H1 (cell line): ENCODE measurements at regions of chr17 and their contacts with region 1.

Region 1: DNA sequence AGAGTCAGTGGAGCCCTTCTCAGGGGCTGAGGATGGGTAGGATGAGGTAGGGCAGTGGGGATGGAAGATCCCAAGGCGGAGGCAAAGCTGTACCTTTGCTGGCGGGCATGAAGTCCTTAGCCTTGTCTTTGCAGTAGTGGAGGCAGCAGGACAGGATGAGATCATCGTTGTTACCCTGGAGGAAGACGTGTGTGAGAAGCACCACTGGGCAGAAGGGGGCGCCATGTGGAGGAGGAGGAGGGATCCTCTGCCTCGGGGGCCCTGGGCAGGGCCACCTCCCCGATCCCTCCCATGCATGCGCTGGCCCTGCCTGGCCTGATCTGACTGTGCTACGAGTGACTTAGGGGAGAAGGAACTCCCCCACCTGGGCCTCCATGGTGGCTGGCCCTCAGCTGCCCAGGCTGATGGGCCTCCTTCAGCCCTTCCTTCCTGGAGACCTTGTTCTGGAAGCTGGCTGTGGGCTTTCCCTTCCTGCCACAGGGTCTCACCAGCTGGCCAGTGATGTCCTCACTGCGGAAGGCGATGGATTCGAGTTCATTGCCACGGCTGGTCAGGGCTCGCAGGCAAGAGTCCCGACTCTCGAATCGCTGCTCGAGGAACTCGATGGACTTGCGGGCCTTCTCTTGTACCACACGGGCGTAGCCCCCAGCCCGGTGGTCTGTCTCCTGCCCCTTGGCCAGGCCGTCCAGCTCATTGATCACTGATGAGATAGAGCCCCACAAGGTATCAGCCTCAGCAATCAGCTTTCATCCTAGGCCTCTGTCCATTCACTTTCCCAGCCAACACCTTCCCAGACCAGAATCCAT is 10.3 kb downstream of the HIC1 start:
- DNase-seq: peak in 1 of 2 experiments; percentile 89
- H3K4me3 ChIP-seq: no peak overlapping the region
- H3K27ac ChIP-seq: no peak overlapping the region
- H3K4me1 ChIP-seq: peaks cover 0 to 13% (median 9%) of the 10 kb centered on the region in 4 experiments; a peak in 6 of 7 replicates
- H3K27me3 ChIP-seq: peaks cover 0 to 11% (median 5%) of the 10 kb centered on the region in 4 experiments; a peak in 5 of 7 replicates
- CTCF ChIP-seq: peak; percentile 70 to 91 (median 90)
- EP300 ChIP-seq: no peak
- POLR2A ChIP-seq: no peak
- RAD21 ChIP-seq: peak; percentile 71 to 73

Region 2: DNA sequence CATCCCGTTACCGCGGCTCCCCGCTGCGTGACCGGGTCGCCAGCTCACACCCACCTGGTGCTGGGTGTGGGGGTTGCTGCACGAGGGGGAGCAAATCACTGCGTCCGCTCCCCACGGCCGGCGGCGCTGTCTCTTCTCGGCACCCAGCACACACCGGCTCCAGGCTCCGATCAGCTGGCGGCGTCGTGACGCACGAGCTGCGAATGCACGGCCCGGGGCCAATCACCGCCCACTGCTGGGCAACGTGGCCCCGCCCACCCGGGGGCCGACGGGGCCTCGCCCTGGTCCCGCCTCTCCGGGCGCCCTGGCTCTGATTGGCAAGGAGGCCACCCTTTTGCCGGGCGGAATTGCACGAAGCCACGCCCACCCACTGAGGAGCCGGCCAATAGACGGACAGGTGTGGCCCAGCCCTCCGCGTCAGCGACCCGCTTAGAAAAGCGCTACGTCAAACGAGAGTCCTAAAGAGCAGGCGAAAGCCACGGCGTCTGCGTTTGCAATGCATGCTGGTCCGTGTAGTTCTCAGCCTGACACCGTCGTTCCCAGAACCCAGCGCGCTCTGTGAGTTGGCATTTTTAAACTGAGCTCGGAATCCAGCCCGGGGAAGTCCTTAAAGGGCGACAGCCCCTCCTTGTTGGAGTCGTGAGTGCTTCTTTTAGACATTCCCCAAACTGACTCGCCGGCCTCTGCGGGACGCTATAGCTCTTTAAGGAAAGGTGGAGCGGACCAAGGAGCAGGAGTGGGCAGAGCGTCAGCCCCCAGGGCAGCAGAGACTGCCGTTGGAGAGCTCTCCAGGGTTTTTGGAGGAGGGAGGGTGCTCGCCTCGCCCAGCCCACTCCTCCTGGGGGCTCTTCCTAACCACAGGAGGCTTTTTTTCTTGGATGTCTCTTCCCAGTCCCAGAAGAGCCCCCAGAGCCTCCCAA is 348.8 kb before region 1 on chr17:
- CTCF ChIA-PET with region 1: no interaction called
- POLR2A ChIA-PET with region 1: no interaction called
- DNase-seq: peak; percentile 99 to 100
- H3K4me3 ChIP-seq: peak overlapping the region; percentile 74 to 94 (median 82)
- H3K27ac ChIP-seq: peak overlapping the region; percentile 94
- H3K4me1 ChIP-seq: peaks cover 0 to 16% (median 12%) of the 10 kb centered on the region in 4 experiments; a peak in 6 of 7 replicates
- H3K27me3 ChIP-seq: no peaks in the 10 kb centered on the region
- CTCF ChIP-seq: no peak; a peak in 1 of 4 replicates
- EP300 ChIP-seq: no peak
- POLR2A ChIP-seq: peak; percentile 32 to 70
- RAD21 ChIP-seq: no peak

Region 3: DNA sequence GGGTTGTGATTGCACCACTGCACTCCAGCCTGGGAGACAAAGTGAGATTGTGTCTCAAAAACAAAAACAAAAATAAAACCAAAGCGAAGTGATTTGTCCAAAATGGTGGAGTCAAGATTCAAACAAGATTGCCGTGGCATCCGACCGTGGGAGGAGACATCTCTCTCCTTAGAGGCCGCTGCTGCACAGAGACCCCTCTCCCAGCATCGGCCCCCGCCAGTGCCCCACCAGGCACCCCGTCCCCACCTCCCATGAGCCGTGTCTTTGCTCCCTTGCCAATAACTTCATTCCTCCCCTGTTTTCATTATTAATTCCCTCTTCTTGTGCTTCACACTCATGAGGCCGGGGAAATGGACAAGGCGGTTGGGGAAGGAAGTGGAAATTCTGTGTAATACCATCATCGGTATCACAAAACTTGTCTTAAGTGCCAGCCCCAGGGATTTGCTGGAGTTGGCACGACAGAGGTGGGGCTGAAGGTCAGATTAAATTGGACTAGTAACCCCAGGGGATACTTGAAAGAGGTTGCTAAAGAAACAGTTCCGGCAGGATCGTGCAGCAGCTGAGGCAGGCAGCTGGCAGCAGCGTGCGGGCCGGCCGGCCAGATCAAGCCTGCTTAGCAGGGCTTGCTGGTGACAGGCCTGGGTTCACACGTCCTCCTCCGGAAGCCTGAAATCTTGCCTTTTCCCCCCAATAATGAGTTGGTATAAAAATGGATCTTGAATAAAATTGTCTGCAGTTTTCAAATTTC is 106.9 kb before region 1 on chr17:
- CTCF ChIA-PET with region 1: no interaction called
- POLR2A ChIA-PET with region 1: no interaction called
- DNase-seq: no peak
- H3K4me3 ChIP-seq: no peak overlapping the region
- H3K27ac ChIP-seq: no peak overlapping the region
- H3K4me1 ChIP-seq: peaks cover 0 to 7% (median 3%) of the 10 kb centered on the region in 4 experiments; a peak in 4 of 7 replicates
- H3K27me3 ChIP-seq: no peaks in the 10 kb centered on the region
- CTCF ChIP-seq: no peak
- EP300 ChIP-seq: no peak
- POLR2A ChIP-seq: no peak
- RAD21 ChIP-seq: no peak

Region 4: GRCh38 chr17:2075336-2076086 is 10.3 kb after region 1 on chr17:
- CTCF ChIA-PET with region 1: interaction called, 122 read pairs
- POLR2A ChIA-PET with region 1: interaction called, 4 read pairs
- DNase-seq: no peak
- H3K4me3 ChIP-seq: no peak overlapping the region
- H3K27ac ChIP-seq: no peak overlapping the region; the same call in 1 of the 2 replicates
- H3K4me1 ChIP-seq: peaks cover 2 to 12% (median 5%) of the 10 kb centered on the region in 4 experiments; a peak in 6 of 7 replicates
- H3K27me3 ChIP-seq: no peaks in the 10 kb centered on the region
- CTCF ChIP-seq: peak in 2 of 3 experiments; percentile 5 to 8; a peak in 1 of 4 replicates
- EP300 ChIP-seq: no peak
- POLR2A ChIP-seq: no peak
- RAD21 ChIP-seq: peak in 1 of 2 experiments; percentile 1; a peak in 1 of 4 replicates

Region 5: DNA sequence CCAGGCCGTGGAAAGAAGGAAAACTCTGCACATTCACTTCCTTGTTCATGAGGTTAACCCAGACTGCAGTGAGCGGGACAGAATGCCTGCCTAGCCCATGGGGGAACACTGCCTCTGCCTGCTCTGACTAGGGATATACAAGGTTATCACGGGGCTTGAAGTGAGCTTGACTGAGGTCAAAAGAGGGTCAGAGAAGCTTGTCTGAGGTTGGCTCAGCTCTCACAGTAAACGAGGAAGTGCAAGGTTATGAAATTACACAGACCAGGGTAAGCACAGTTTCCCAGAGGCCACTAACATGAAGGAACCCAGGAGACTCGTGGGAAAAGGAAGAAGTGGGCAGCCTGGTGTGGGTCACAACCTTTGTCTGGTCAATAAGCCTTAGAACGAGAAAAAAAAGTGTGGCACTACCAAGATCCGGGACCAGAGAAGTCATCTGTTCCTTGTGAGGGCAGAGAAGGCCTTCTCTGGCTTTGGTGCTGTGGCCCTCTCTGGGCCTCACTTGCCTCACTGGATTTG is 18.5 kb after region 1 on chr17:
- CTCF ChIA-PET with region 1: interaction called, 21 read pairs
- POLR2A ChIA-PET with region 1: interaction called, 4 read pairs
- DNase-seq: no peak
- H3K4me3 ChIP-seq: no peak overlapping the region
- H3K27ac ChIP-seq: no peak overlapping the region
- H3K4me1 ChIP-seq: 0 out of 7 replicates have a peak, but pooled peaks cover 0 to 3% (median 0%) of the 10 kb centered on the region in 4 experiments
- H3K27me3 ChIP-seq: no peaks in the 10 kb centered on the region
- CTCF ChIP-seq: no peak
- EP300 ChIP-seq: no peak
- POLR2A ChIP-seq: no peak
- RAD21 ChIP-seq: no peak

Region 6: GRCh38 chr17:2172077-2172851 is 107.1 kb after region 1 on chr17:
- CTCF ChIA-PET with region 1: interaction called, 12 read pairs
- POLR2A ChIA-PET with region 1: interaction called, 3 read pairs
- DNase-seq: no peak
- H3K4me3 ChIP-seq: no peak overlapping the region
- H3K27ac ChIP-seq: no peak overlapping the region
- H3K4me1 ChIP-seq: peaks cover 0 to 4% (median 0%) of the 10 kb centered on the region in 4 experiments; a peak in 2 of 7 replicates
- H3K27me3 ChIP-seq: no peaks in the 10 kb centered on the region
- CTCF ChIP-seq: no peak
- EP300 ChIP-seq: no peak
- POLR2A ChIP-seq: no peak
- RAD21 ChIP-seq: no peak

Region 7: GRCh38 chr17:2253768-2254406 is 188.7 kb after region 1 on chr17:
- CTCF ChIA-PET with region 1: interaction called, 121 read pairs
- POLR2A ChIA-PET with region 1: no interaction called
- DNase-seq: no peak
- H3K4me3 ChIP-seq: no peak overlapping the region
- H3K27ac ChIP-seq: no peak overlapping the region
- H3K4me1 ChIP-seq: no peaks in the 10 kb centered on the region
- H3K27me3 ChIP-seq: no peaks in the 10 kb centered on the region
- CTCF ChIP-seq: no peak
- EP300 ChIP-seq: no peak
- POLR2A ChIP-seq: no peak
- RAD21 ChIP-seq: no peak